Endothelial cell of umbilical vein (primary cell): ENCODE measurements at regions of chr9 and their contacts with region 1.

Region 1: GRCh38 chr9:69759421-69760277 is at the start of gene PTAR1:
- DNase-seq: peak; percentile 90
- H3K4me3 ChIP-seq: peak within 1 kb of the TSS; percentile 34 to 95 (median 91)
- H3K27ac ChIP-seq: peak within 1 kb of the TSS; percentile 64
- H3K4me1 ChIP-seq: peaks cover 15% of the 10 kb centered on the region
- H3K27me3 ChIP-seq: no peaks in the 10 kb centered on the region
- CTCF ChIP-seq: no peak
- POLR2A ChIP-seq: peak; percentile 85
- total RNA-seq, gene PTAR1: 41.5 and 46.8 TPM in 2 replicates

Region 2: DNA sequence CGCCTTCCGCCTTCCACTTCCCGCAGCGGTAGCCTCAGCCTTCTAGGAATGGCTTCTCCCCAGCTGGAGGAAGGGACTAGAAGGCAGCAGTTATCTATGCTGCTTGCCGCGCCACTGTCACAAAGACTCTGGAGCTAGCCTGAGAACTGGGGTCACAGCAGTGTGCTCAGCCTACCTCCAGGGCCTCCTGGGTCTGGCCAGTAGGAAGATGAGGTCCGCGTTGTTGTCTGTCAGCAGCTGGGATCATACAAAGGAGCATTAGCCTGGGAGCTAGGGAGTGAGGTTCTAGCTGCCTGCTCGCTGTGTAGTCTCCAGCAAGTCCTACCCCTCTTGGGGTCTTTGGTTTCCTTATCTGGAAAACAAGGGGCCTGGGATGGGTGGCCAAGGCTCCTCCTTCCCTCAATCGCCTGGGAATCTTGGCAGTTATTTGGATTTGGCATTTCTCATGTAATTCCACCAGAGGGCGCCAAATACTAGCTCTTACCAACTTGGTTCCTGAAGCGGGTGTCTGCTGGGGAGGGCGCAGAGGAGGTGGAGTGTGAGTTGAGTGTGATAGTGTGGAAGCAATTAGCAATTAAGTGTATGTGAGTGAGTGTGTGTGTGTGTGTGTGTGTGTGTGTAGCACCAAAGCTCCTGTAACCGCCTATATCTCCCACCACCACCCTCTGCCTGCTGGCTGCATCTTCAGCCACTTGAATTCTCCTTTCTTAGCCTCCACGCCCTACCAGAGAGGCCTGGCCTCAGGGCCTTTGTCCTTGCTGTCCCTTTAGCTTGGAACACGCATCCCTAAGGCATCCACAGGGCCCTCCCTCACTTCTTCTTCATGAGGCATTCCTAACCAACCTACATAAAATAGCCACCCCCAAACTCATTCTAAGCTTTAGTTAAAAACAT is 337.5 kb before region 1 on chr9:
- CTCF ChIA-PET with region 1: no interaction called
- POLR2A ChIA-PET with region 1: no interaction called
- dilution Hi-C with region 1: no loop called
- intact Hi-C with region 1: loop called (anchors 5 kb)
- DNase-seq: peak; percentile 66
- H3K4me3 ChIP-seq: no peak overlapping the region
- H3K27ac ChIP-seq: no peak overlapping the region
- H3K4me1 ChIP-seq: no peaks in the 10 kb centered on the region
- H3K27me3 ChIP-seq: peaks cover 2% of the 10 kb centered on the region in 2 experiments
- CTCF ChIP-seq: peak; percentile 58 to 66
- POLR2A ChIP-seq: no peak

Region 3: GRCh38 chr9:69822091-69822750 is 62.6 kb after region 1 on chr9:
- CTCF ChIA-PET with region 1: interaction called, 3 read pairs
- POLR2A ChIA-PET with region 1: no interaction called
- dilution Hi-C with region 1: no loop called
- intact Hi-C with region 1: loop called (anchors 5 kb)
- DNase-seq: no peak
- H3K4me3 ChIP-seq: no peak overlapping the region
- H3K27ac ChIP-seq: no peak overlapping the region
- H3K4me1 ChIP-seq: peaks cover 3% of the 10 kb centered on the region
- H3K27me3 ChIP-seq: peaks cover 71 to 87% of the 10 kb centered on the region in 2 experiments
- CTCF ChIP-seq: no peak
- POLR2A ChIP-seq: no peak

Region 4: GRCh38 chr9:69898714-69899209 is 139.1 kb after region 1 on chr9:
- CTCF ChIA-PET with region 1: interaction called, 4 read pairs
- POLR2A ChIA-PET with region 1: no interaction called
- dilution Hi-C with region 1: no loop called
- intact Hi-C with region 1: loop called (anchors 1 kb)
- DNase-seq: peak; percentile 95
- H3K4me3 ChIP-seq: peak overlapping the region in 1 of 3 experiments; percentile 12
- H3K27ac ChIP-seq: peak overlapping the region; percentile 94
- H3K4me1 ChIP-seq: peaks cover 32% of the 10 kb centered on the region
- H3K27me3 ChIP-seq: no peaks in the 10 kb centered on the region
- CTCF ChIP-seq: no peak
- POLR2A ChIP-seq: peak; percentile 75